PC-9 (cell line): ENCODE measurements at regions of chr22 and their contacts with region 1.

Region 1: GRCh38 chr22:37316875-37317371 is 34.6 kb downstream of the CYTH4 start:
- DNase-seq: peak; percentile 90
- H3K4me3 ChIP-seq: no peak overlapping the region
- H3K27ac ChIP-seq: no peak overlapping the region
- H3K4me1 ChIP-seq: peaks cover 51% of the 10 kb centered on the region
- H3K27me3 ChIP-seq: no peaks in the 10 kb centered on the region
- CTCF ChIP-seq: peak; percentile 99

Region 2: DNA sequence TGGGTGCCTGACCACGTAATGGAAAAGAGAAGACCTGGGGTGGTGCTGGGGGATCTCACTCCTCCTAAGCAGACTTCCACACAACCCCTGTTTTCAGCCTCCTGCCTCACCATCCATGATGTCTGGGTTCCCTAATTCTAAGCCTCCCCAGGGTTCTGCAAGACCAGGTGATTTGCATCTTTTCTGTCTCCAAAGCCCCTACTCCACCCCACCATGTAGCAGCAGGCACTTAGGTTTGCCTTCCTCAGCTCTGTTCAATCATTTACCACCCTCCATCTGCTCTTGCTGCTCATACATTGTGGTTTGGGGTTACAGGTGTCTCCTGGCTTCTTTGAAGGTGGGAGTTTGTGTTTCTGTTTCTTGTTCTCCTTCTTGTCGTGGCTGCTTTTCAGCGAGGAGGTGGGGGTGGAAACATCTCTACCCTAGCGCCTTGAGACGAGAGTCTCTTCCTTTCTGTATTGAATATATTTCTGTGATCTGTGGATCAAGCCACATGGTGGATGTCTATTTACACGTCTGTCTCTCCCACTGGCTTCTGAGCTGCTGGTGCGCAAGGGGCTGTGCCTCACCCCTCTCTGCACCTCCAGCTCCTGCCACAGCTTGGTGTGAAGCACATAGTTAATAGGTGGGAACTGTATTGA is 98.0 kb before region 1 on chr22:
- CTCF ChIA-PET with region 1: no interaction called
- POLR2A ChIA-PET with region 1: no interaction called
- intact Hi-C with region 1: no loop called
- DNase-seq: no peak
- H3K4me3 ChIP-seq: no peak overlapping the region
- H3K27ac ChIP-seq: no peak overlapping the region
- H3K4me1 ChIP-seq: no peaks in the 10 kb centered on the region
- H3K27me3 ChIP-seq: no peaks in the 10 kb centered on the region
- CTCF ChIP-seq: no peak

Region 3: DNA sequence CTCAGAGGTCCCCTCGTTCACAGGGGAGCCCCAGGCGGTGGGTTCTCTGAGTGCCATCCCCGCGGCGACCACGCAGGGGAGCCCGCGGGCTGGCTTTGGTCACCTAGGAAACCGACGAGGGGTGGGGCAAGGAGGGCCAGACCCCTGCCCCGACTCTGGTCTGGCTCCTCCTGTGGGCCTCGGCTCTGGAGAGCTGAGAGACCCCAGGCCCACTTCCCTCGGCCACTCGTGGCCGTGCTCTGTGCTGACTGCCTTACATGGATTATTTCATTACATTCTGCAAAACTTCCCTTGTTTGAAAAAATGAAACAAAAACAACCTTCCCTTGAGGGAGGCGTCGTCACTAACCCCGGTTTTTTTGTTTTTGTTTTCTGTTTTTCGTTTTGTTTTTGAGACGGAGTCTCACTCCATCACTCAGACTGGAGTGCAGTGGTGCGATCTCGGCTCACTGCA is 49.8 kb before region 1 on chr22:
- CTCF ChIA-PET with region 1: interaction called, 3 read pairs
- POLR2A ChIA-PET with region 1: no interaction called
- intact Hi-C with region 1: loop called (anchors 2 kb)
- DNase-seq: peak in 1 of 2 experiments; percentile 71
- H3K4me3 ChIP-seq: peak overlapping the region; percentile 56
- H3K27ac ChIP-seq: peak overlapping the region; percentile 42; the same call in 1 of the 2 replicates
- H3K4me1 ChIP-seq: peaks cover 13% of the 10 kb centered on the region
- H3K27me3 ChIP-seq: no peaks in the 10 kb centered on the region
- CTCF ChIP-seq: peak; percentile 96

Region 4: DNA sequence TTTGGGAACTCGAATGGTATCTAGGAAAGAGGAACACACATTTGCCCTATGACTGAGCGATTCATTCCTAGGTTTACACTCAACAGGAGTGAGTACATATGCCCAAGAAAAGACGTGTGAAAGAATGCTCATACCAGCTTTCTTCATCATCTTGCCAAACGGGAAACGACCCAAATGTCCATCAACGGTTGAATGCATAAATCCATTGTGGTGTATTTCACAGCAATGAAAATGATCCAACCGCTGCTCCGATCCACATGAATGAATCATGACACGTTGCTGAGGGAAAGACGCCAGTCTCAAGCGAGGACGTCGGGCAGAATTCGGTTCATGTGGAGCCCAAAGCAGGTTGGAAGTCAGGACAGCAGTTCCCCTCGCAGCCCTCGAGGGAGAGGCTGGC is 36.9 kb after region 1 on chr22:
- CTCF ChIA-PET with region 1: no interaction called
- POLR2A ChIA-PET with region 1: no interaction called
- intact Hi-C with region 1: loop called (anchors 5 kb)
- DNase-seq: peak; percentile 59 to 99
- H3K4me3 ChIP-seq: peak overlapping the region; percentile 1; the same call in 1 of the 2 replicates
- H3K27ac ChIP-seq: peak overlapping the region; percentile 90
- H3K4me1 ChIP-seq: peaks cover 57% of the 10 kb centered on the region
- H3K27me3 ChIP-seq: no peaks in the 10 kb centered on the region
- CTCF ChIP-seq: no peak

Region 5: GRCh38 chr22:37428649-37429586 is 112.0 kb after region 1 on chr22:
- CTCF ChIA-PET with region 1: no interaction called
- POLR2A ChIA-PET with region 1: no interaction called
- intact Hi-C with region 1: loop called (anchors 2 kb)
- DNase-seq: no peak
- H3K4me3 ChIP-seq: no peak overlapping the region
- H3K27ac ChIP-seq: no peak overlapping the region
- H3K4me1 ChIP-seq: peaks cover 50% of the 10 kb centered on the region
- H3K27me3 ChIP-seq: no peaks in the 10 kb centered on the region
- CTCF ChIP-seq: peak; percentile 82

Region 6: DNA sequence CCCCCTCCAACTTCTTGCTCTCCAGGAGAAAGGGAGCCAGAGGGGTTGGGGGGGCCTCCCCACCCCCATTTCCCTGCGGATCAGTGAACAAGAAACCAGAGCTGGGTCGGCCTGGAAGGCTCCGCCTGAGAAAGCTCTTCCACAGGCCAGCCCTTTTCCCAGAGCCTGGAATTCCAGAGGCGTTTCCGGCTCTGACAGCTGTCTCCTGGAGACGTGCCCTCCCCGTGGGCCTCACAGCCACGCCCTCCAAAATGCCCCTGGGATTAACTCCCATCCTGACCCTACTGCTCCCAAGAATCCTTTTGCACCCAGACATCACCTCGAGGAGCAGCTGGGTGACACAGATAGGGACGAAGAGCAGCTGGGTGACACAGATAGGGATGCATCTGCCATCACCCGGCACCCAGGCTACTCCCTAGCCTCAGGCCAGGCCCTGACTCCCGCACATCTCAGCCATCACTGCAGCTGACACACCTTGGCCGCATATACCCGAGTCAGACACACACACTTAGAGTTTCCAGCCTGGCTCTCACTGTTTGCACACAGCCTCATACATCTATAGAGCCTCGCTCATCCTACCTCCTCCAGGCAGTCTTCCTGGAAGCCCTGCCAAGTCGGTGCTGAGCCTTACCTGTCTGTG is 235.7 kb after region 1 on chr22:
- CTCF ChIA-PET with region 1: no interaction called
- POLR2A ChIA-PET with region 1: no interaction called
- intact Hi-C with region 1: no loop called
- DNase-seq: no peak
- H3K4me3 ChIP-seq: no peak overlapping the region
- H3K27ac ChIP-seq: no peak overlapping the region
- H3K4me1 ChIP-seq: peaks cover 22% of the 10 kb centered on the region
- H3K27me3 ChIP-seq: no peaks in the 10 kb centered on the region
- CTCF ChIP-seq: no peak

Region 7: GRCh38 chr22:37566903-37567820 is 250.2 kb after region 1 on chr22:
- CTCF ChIA-PET with region 1: no interaction called
- POLR2A ChIA-PET with region 1: no interaction called
- intact Hi-C with region 1: loop called (anchors 5 kb)
- DNase-seq: peak; percentile 93 to 98
- H3K4me3 ChIP-seq: no peak overlapping the region
- H3K27ac ChIP-seq: peak overlapping the region; percentile 81
- H3K4me1 ChIP-seq: peaks cover 91% of the 10 kb centered on the region
- H3K27me3 ChIP-seq: no peaks in the 10 kb centered on the region
- CTCF ChIP-seq: peak; percentile 99

Region 8: DNA sequence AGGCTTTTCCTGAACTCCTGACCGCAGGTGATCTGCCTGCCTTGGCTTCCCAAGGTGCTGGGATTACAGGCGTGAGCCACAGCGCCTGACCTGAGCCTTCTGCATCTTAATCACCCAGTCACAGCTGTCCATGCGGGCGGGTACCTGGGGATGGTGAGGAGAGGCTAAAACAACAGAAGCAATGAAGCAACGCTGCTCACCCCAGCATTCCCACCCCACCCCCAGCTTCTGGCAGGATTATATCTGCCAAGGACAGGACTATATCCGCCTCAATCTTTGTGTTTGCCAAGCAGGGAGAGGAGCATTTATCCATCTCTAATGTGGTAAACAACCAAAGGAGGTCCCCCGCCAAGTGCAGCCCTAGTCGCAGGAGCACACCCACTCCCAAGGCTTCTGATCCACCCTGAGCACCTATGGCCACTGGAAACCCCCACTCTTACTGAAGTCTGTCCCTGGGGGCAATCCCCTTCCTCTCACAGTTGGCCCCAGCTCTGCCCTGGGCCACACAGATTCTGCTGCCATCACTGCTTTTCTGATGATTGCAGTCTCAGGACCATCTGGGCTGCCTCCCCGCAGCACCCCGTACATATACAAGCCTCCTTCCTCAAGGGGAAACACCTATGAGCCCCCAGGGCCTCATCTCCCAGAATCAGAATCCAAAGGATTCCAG is 271.8 kb after region 1 on chr22:
- CTCF ChIA-PET with region 1: interaction called, 4 read pairs
- POLR2A ChIA-PET with region 1: no interaction called
- intact Hi-C with region 1: loop called (anchors 1 kb)
- DNase-seq: peak in 1 of 2 experiments; percentile 66
- H3K4me3 ChIP-seq: no peak overlapping the region
- H3K27ac ChIP-seq: no peak overlapping the region
- H3K4me1 ChIP-seq: peaks cover 5% of the 10 kb centered on the region; the same call in 1 of the 2 replicates
- H3K27me3 ChIP-seq: no peaks in the 10 kb centered on the region
- CTCF ChIP-seq: no peak